Mammary epithelial cell (primary cell): ENCODE measurements at regions of chr10 and their contacts with region 1.

Region 1: DNA sequence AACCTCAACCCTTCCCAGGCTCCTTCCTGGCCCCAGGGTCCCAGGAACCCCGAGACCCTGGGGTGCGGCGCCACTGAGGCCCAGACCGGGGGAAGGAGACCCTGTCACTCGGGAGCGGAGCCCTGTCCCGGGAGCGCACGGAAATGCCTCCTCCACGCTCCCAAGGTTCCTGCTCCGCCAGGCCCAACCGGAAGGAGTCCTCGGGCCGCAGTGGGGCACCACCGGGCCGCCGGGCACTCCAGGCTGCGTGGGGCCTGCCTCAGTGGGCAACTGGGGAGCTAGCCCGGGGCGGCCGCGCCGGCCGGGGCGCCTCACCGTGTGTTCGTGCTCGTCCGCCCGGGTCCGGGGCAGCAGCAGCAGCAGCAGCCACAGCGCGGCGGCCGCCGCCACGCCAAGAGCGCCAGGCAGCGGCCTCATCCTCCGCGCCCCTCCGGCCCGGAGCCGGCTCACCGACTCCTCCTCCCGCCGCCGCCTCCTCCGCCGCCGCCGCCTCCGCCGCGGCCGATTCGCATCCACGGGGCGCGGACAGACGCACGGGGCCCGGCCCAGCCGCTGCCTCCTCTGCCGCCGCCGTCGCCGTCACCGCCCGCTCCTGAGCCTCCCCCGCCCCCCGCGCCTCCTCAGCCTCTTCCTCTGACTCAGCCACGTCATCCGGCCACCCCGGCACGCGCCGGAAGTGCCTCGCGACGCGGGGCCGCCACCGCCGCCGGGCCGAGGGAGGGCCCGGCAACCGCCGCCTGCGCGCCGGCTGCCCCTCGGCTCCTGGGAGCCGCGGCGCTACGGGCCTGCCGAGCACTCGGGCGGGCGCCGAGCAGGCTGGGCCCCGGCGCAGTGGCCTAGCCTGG is at the start of gene TM9SF3:
- DNase-seq: peak; percentile 85
- H3K4me3 ChIP-seq: peak within 1 kb of the TSS; percentile 63 to 73 (median 70)
- H3K27ac ChIP-seq: peak within 1 kb of the TSS; percentile 91
- H3K4me1 ChIP-seq: peaks cover 27% of the 10 kb centered on the region
- H3K27me3 ChIP-seq: no peaks in the 10 kb centered on the region
- CTCF ChIP-seq: peak in 1 of 2 donors; percentile 20
- total RNA-seq, gene TM9SF3: 114 to 129 TPM

Region 2: GRCh38 chr10:96496281-96496925 is 90.2 kb before region 1 on chr10:
- CTCF ChIA-PET with region 1: no interaction called
- dilution Hi-C with region 1: loop called (anchors 5 kb)
- in situ Hi-C with region 1: no loop called
- intact Hi-C with region 1: no loop called
- DNase-seq: no peak
- H3K4me3 ChIP-seq: no peak overlapping the region
- H3K27ac ChIP-seq: no peak overlapping the region
- H3K4me1 ChIP-seq: peaks cover under 1% of the 10 kb centered on the region
- H3K27me3 ChIP-seq: no peaks in the 10 kb centered on the region
- CTCF ChIP-seq: no peak

Region 3: DNA sequence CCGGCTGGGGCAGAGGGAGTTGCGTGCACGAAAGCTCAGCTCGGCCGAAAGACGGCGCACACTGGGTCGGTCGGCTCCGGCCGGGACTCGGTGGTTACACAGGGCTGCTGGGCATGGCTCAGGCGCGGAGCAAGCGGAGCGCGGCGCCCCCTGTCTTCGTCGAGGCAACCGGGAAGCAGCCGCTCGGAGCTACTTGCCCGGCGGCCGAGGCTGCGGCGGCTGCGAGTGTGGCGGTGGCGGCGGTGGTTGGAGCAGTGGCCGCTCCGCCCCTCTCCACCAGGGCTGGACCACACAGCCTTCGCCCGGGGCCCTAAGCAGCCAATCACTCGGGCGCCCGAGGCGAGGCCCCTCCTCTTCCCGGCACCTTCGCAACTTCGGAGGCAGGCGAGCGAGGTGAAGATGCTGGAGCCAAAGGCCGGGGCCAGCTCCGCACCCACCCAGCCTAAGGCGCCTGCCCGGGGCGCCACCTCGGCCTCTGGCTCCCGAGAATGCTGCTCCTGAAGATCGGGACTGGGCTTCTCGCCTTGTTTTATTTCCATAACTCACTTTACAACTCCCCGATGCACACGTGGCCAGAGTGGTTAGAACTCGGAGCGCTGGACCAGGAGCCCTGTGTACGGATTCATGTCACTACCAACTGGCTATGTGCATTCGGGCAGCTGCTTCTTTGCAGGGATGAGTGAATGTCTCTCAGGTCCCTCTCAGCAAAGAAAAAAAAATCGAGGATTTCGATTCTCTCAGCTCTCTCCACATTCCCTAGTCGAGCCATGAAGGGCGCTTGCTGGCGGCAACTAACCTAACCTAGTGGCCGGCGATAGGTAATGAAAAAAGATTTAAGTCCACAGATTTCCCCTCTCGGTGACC is 72.7 kb before region 1 on chr10 and contains the start of gene TLL2:
- CTCF ChIA-PET with region 1: no interaction called
- dilution Hi-C with region 1: no loop called
- in situ Hi-C with region 1: no loop called
- intact Hi-C with region 1: loop called (anchors 2 kb)
- DNase-seq: peak; percentile 91
- H3K4me3 ChIP-seq: peak within 1 kb of the TSS; percentile 35 to 65 (median 54)
- H3K27ac ChIP-seq: no peak within 1 kb of the TSS
- H3K4me1 ChIP-seq: peaks cover 28% of the 10 kb centered on the region
- H3K27me3 ChIP-seq: no peaks in the 10 kb centered on the region
- CTCF ChIP-seq: peak; percentile 15 to 74
- total RNA-seq, gene TLL2: 0.17 to 0.59 TPM